Caco-2 (cell line): ENCODE measurements at regions of chr5 and their contacts with region 1.

Region 1: GRCh38 chr5:123119334-123119986 is 30.4 kb downstream of the PRDM6 start:
- DNase-seq: peak; percentile 90 to 93
- H3K4me3 ChIP-seq: no peak overlapping the region
- H3K4me3 Mint-ChIP-seq: peak overlapping the region; percentile 64
- H3K27ac Mint-ChIP-seq: peak overlapping the region; percentile 68
- H3K4me1 ChIP-seq: peaks cover 11% of the 10 kb centered on the region
- H3K4me1 Mint-ChIP-seq: peaks cover 26% of the 10 kb centered on the region
- H3K27me3 ChIP-seq: no peaks in the 10 kb centered on the region
- H3K27me3 Mint-ChIP-seq: no peaks in the 10 kb centered on the region
- CTCF ChIP-seq: peak; percentile 35 to 79

Region 2: GRCh38 chr5:122896598-122897282 is 222.7 kb before region 1 on chr5:
- CTCF ChIA-PET with region 1: no interaction called
- POLR2A ChIA-PET with region 1: no interaction called
- intact Hi-C with region 1: loop called (anchors 2 kb)
- DNase-seq: peak in 1 of 2 experiments; percentile 20
- H3K4me3 ChIP-seq: no peak overlapping the region
- H3K4me3 Mint-ChIP-seq: no peak overlapping the region
- H3K27ac Mint-ChIP-seq: no peak overlapping the region
- H3K4me1 ChIP-seq: peaks cover 7% of the 10 kb centered on the region
- H3K4me1 Mint-ChIP-seq: peaks cover 6% of the 10 kb centered on the region
- H3K27me3 ChIP-seq: no peaks in the 10 kb centered on the region
- H3K27me3 Mint-ChIP-seq: no peaks in the 10 kb centered on the region
- CTCF ChIP-seq: peak; percentile 69 to 70

Region 3: GRCh38 chr5:123036391-123037103 is 82.9 kb before region 1 on chr5 and contains the start of gene PPIC:
- CTCF ChIA-PET with region 1: no interaction called
- POLR2A ChIA-PET with region 1: no interaction called
- intact Hi-C with region 1: loop called (anchors 1 kb)
- DNase-seq: peak; percentile 82 to 92
- H3K4me3 ChIP-seq: peak within 1 kb of the TSS; percentile 87
- H3K4me3 Mint-ChIP-seq: peak within 1 kb of the TSS; percentile 81
- H3K27ac Mint-ChIP-seq: peak within 1 kb of the TSS; percentile 2
- H3K4me1 ChIP-seq: peaks cover 7% of the 10 kb centered on the region; the same call in 1 of the 2 replicates
- H3K4me1 Mint-ChIP-seq: peaks cover 9% of the 10 kb centered on the region
- H3K27me3 ChIP-seq: no peaks in the 10 kb centered on the region
- H3K27me3 Mint-ChIP-seq: peaks cover 6% of the 10 kb centered on the region
- CTCF ChIP-seq: no peak
- total RNA-seq, gene PPIC: 46.7 and 50.6 TPM in 2 replicates

Region 4: DNA sequence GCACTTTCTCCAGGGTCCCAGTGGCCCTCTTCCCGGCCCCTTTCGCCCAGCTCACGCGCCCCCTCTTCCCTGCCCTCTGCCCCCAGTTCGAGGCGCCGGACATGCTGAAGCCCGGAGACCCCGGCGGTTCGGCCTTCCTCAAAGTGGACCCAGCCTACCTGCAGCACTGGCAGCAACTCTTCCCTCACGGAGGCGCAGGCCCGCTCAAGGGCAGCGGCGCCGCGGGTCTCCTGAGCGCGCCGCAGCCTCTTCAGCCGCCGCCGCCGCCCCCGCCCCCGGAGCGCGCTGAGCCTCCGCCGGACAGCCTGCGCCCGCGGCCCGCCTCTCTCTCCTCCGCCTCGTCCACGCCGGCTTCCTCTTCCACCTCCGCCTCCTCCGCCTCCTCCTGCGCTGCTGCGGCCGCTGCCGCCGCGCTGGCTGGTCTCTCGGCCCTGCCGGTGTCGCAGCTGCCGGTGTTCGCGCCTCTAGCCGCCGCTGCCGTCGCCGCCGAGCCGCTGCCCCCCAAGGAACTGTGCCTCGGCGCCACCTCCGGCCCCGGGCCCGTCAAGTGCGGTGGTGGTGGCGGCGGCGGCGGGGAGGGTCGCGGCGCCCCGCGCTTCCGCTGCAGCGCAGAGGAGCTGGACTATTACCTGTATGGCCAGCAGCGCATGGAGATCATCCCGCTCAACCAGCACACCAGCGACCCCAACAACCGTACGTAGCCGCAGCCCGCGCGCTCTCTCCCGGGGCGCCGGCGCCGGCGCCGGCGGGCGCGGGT is 29.4 kb before region 1 on chr5:
- CTCF ChIA-PET with region 1: interaction called, 3 read pairs
- POLR2A ChIA-PET with region 1: no interaction called
- intact Hi-C with region 1: loop called (anchors 1 kb)
- DNase-seq: peak in 1 of 2 experiments; percentile 60
- H3K4me3 ChIP-seq: peak overlapping the region; percentile 61
- H3K4me3 Mint-ChIP-seq: peak overlapping the region; percentile 85
- H3K27ac Mint-ChIP-seq: no peak overlapping the region
- H3K4me1 ChIP-seq: 0 out of 2 replicates have a peak, but pooled peaks cover 3% of the 10 kb centered on the region
- H3K4me1 Mint-ChIP-seq: peaks cover 6% of the 10 kb centered on the region
- H3K27me3 ChIP-seq: no peaks in the 10 kb centered on the region; the same call in 1 of the 2 replicates
- H3K27me3 Mint-ChIP-seq: peaks cover 46% of the 10 kb centered on the region
- CTCF ChIP-seq: no peak

Region 5: GRCh38 chr5:123099514-123100151 is 19.8 kb before region 1 on chr5:
- CTCF ChIA-PET with region 1: interaction called, 8 read pairs
- POLR2A ChIA-PET with region 1: no interaction called
- intact Hi-C with region 1: loop called (anchors 1 kb)
- DNase-seq: peak in 1 of 2 experiments; percentile 69
- H3K4me3 ChIP-seq: peak overlapping the region; percentile 40
- H3K4me3 Mint-ChIP-seq: peak overlapping the region; percentile 70
- H3K27ac Mint-ChIP-seq: no peak overlapping the region
- H3K4me1 ChIP-seq: no peaks in the 10 kb centered on the region
- H3K4me1 Mint-ChIP-seq: peaks cover 7% of the 10 kb centered on the region
- H3K27me3 ChIP-seq: no peaks in the 10 kb centered on the region
- H3K27me3 Mint-ChIP-seq: peaks cover 4% of the 10 kb centered on the region
- CTCF ChIP-seq: peak in 1 of 2 experiments; percentile 40

Region 6: DNA sequence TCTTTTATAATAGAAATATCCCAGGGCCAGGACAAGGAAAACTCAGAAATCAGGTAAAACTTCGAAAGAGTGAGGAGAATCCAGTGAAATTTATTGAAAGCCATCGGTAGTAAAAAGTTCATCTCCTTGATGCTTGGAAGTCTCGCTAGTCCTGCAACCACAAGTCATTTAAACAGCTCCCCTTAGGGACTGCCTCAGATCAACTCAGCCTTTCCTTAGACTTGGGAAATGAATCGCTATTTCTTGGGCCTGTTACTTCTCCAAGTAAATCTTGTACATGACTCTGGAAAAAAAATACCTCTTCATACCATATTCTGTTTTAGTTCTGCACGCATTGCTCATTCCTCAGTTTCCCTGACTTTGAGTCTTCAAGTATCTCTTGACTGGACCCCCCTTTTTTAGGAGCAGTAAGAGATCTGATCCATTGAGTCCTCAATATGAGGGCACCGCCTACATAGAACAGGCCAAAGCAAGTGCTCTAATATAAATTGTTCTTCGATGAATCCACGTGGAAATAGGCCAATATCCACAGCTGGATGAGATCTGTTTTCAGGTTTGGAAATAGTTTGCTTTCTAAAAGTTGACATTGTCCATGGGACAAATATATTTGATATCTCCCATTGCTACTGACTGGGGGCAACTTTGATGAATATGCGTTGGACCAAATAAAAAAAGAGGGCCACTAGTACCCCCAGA is 83.8 kb after region 1 on chr5:
- CTCF ChIA-PET with region 1: no interaction called
- POLR2A ChIA-PET with region 1: no interaction called
- intact Hi-C with region 1: no loop called
- DNase-seq: no peak
- H3K4me3 ChIP-seq: no peak overlapping the region
- H3K4me3 Mint-ChIP-seq: no peak overlapping the region
- H3K27ac Mint-ChIP-seq: no peak overlapping the region
- H3K4me1 ChIP-seq: no peaks in the 10 kb centered on the region
- H3K4me1 Mint-ChIP-seq: no peaks in the 10 kb centered on the region
- H3K27me3 ChIP-seq: no peaks in the 10 kb centered on the region
- H3K27me3 Mint-ChIP-seq: no peaks in the 10 kb centered on the region
- CTCF ChIP-seq: no peak

Region 7: DNA sequence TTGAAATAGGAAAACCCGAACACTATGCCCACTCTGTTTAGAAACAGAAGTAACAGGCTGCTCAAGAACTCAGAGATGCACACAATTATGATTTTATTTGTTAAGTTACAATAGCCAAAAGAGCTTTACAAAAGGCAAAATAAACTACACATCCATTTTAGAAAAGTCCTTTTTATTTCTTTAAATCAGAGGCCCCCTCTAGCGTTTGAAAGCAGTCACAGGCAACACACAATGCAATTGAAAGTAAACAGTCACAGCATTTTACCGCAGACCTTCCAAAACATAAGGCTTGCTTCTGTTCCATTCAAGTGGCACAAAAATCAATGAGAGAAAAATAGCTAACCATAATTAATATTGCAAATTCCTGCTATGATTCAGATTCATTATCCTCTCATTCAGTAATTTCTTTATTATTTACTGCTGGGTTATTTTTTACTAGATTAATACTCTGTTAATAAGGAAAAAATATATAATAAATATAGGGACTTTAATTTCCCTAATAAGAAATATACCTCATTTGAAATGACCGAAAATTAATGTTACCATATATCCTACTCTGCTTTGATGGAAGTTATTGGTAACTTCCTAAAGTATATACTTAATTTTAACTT is 225.5 kb after region 1 on chr5:
- CTCF ChIA-PET with region 1: no interaction called
- POLR2A ChIA-PET with region 1: interaction called, 3 read pairs
- intact Hi-C with region 1: loop called (anchors 1 kb)
- DNase-seq: peak in 1 of 2 experiments; percentile 22
- H3K4me3 ChIP-seq: no peak overlapping the region
- H3K4me3 Mint-ChIP-seq: no peak overlapping the region
- H3K27ac Mint-ChIP-seq: no peak overlapping the region
- H3K4me1 ChIP-seq: 0 out of 2 replicates have a peak, but pooled peaks cover 4% of the 10 kb centered on the region
- H3K4me1 Mint-ChIP-seq: no peaks in the 10 kb centered on the region
- H3K27me3 ChIP-seq: no peaks in the 10 kb centered on the region
- H3K27me3 Mint-ChIP-seq: no peaks in the 10 kb centered on the region
- CTCF ChIP-seq: peak; percentile 46 to 64